ENCODE measurements at regions of chr1 and their contacts with region 1.

Region 1: GRCh38 chr1:8560611-8561544 is 243.0 kb downstream of the SLC45A1 start:
- DNase-seq: no peak
- ATAC-seq: peak; percentile 74

Region 2: GRCh38 chr1:8671306-8671917 is 110.5 kb after region 1 on chr1:
- intact Hi-C with region 1: loop called (anchors 2 kb)
- DNase-seq: no peak
- ATAC-seq: peak; percentile 79

Region 3: DNA sequence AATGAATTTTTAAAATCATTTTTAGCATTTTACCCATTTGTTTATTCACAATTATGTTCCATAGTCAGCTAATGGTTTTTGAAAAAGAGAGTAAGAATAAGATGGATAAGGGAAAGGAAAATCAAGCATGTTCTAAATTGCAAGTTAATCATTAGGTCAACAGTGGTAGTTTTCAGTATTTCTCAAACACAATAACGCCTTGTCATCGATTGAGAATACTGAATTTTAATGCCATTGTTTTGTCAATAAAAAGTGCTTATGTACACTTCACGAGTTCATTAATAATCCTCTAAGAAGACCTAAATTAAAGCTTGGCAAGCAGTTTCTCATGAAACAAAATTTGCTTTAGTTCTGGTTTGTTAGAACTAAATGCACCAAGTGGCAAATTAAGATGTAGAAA is 156.3 kb after region 1 on chr1:
- intact Hi-C with region 1: no loop called
- DNase-seq: no peak
- ATAC-seq: no peak

Region 4: GRCh38 chr1:8727809-8728213 is 166.9 kb after region 1 on chr1:
- intact Hi-C with region 1: loop called (anchors 5 kb)
- DNase-seq: peak; percentile 71
- ATAC-seq: peak; percentile 86

Region 5: GRCh38 chr1:8848663-8849386 is 287.9 kb after region 1 on chr1:
- intact Hi-C with region 1: loop called (anchors 10 kb)
- DNase-seq: peak; percentile 96
- ATAC-seq: peak; percentile 99